ENCODE measurements at regions of chr2 and their contacts with region 1.

Region 1: DNA sequence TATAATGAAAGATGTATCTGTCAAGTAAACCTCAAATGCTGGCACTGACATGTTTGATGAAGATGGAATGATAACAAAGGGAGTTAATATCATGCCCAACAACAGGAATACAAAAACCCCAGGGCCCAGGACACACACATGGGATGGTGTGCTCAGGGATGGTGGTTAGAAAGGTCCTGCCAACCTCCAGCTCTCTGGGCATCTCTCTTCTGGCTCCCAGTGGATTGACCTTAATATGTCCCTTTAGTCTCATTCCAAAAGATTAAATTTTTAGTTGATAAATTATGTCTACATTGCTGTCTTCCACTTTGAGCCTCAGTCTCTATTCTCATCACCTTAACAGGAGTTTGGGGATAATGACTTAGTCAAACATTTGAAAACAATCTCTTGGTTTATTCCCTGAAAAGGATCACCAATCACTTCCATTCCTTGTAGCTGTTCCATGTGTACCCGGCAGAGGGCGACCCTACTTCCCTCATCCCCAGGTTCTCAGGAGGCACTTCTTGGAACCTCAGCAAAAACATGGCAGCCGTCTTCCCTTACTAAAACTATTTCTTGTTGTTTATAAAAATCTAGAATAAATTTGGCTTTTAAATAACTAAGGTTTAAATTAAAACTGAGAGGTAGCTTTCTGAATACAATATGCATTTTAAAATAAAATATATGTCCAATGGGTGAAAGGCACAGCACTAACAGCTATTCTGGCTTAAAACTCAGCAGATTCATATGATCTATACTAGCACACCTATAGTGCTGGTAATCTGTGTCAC is 29.6 kb downstream of the MCEE start:
- DNase-seq: peak; percentile 2
- ATAC-seq: peak; percentile 84
- H3K4me3 ChIP-seq: no peak overlapping the region
- H3K27ac ChIP-seq: no peak overlapping the region
- H3K4me1 ChIP-seq: no peaks in the 10 kb centered on the region
- H3K27me3 ChIP-seq: no peaks in the 10 kb centered on the region
- CTCF ChIP-seq: peak; percentile 72 to 80 (median 78)
- EP300 ChIP-seq: no peak
- POLR2A ChIP-seq: no peak
- RAD21 ChIP-seq: peak; percentile 60

Region 2: GRCh38 chr2:69848201-69848770 is 1252.1 kb before region 1 on chr2:
- CTCF ChIA-PET with region 1: no interaction called
- POLR2A ChIA-PET with region 1: no interaction called
- RAD21 ChIA-PET with region 1: no interaction called
- SMC1A ChIA-PET with region 1: no interaction called
- in situ Hi-C with region 1: no loop called
- intact Hi-C with region 1: no loop called
- DNase-seq: no peak
- ATAC-seq: no peak
- H3K4me3 ChIP-seq: no peak overlapping the region
- H3K27ac ChIP-seq: no peak overlapping the region
- H3K4me1 ChIP-seq: no peaks in the 10 kb centered on the region
- H3K27me3 ChIP-seq: no peaks in the 10 kb centered on the region
- CTCF ChIP-seq: no peak
- EP300 ChIP-seq: no peak
- POLR2A ChIP-seq: no peak
- RAD21 ChIP-seq: no peak

Region 3: GRCh38 chr2:70907130-70908057 is 193.0 kb before region 1 on chr2:
- CTCF ChIA-PET with region 1: no interaction called
- POLR2A ChIA-PET with region 1: no interaction called
- RAD21 ChIA-PET with region 1: no interaction called
- SMC1A ChIA-PET with region 1: no interaction called
- in situ Hi-C with region 1: no loop called
- intact Hi-C with region 1: no loop called
- DNase-seq: no peak
- ATAC-seq: no peak
- H3K4me3 ChIP-seq: no peak overlapping the region
- H3K27ac ChIP-seq: no peak overlapping the region
- H3K4me1 ChIP-seq: no peaks in the 10 kb centered on the region
- H3K27me3 ChIP-seq: peaks cover 13 to 42% of the 10 kb centered on the region in 2 experiments
- CTCF ChIP-seq: no peak
- EP300 ChIP-seq: no peak
- POLR2A ChIP-seq: no peak
- RAD21 ChIP-seq: no peak

Region 4: DNA sequence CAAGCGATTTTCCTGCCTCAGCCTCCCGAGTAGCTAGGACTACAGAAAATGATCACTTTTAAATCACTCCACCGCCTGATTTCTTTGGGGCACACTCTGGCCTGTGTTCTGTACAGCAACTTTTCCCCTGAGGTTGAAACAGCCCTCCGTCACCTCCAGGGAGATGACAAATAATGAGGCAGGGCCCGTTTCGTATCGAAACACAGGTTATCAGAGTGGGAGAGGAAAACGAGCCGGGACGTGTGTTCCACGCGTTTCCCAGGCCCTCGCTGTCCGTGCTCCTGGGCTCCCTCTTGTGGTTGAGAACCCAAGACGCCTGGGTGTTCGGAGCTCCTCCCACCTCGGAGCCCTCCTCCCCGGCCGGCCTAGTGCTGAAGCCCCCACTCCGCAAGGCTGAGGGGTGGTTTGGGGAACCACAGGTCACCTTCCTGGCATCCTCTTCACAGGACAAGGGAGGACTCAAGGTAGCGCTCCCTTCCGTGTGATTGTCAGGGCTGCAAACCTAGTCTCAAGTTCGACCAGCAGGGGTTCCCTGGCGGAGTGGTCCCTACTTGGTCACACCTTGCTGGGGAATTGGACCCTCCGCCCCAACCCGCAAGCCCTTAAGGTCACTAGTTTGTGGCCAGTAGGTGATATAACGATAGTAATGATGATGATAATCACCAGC is 151.9 kb before region 1 on chr2:
- CTCF ChIA-PET with region 1: no interaction called
- POLR2A ChIA-PET with region 1: no interaction called
- RAD21 ChIA-PET with region 1: no interaction called
- SMC1A ChIA-PET with region 1: no interaction called
- in situ Hi-C with region 1: no loop called
- intact Hi-C with region 1: no loop called
- DNase-seq: no peak
- ATAC-seq: peak; percentile 98
- H3K4me3 ChIP-seq: no peak overlapping the region
- H3K27ac ChIP-seq: no peak overlapping the region
- H3K4me1 ChIP-seq: no peaks in the 10 kb centered on the region; the same call in 1 of the 2 replicates
- H3K27me3 ChIP-seq: no peaks in the 10 kb centered on the region
- CTCF ChIP-seq: peak; percentile 73 to 87 (median 87)
- EP300 ChIP-seq: no peak
- POLR2A ChIP-seq: no peak
- RAD21 ChIP-seq: peak; percentile 36; the same call in 1 of the 2 replicates

Region 5: DNA sequence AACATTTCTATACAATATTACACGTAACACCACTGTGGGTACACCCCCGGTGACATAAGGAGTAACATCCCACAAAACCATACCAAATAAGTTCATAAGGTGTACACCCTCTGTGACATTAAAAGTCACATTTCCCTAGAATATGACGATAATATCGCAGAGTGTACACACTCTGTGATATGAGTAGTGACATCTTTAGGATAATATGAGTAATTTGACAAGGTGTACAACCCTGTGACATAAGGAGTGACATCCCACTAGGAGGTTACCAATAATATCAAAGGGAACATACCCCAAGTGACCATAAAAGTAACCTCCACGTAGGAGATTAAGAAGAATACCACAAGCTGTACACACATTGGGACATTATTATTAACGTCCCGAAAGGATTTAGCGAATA is 81.8 kb before region 1 on chr2:
- CTCF ChIA-PET with region 1: interaction called, 11 read pairs
- POLR2A ChIA-PET with region 1: no interaction called
- RAD21 ChIA-PET with region 1: interaction called, 4 read pairs
- SMC1A ChIA-PET with region 1: no interaction called
- in situ Hi-C with region 1: no loop called
- intact Hi-C with region 1: no loop called
- DNase-seq: no peak
- ATAC-seq: no peak
- H3K4me3 ChIP-seq: no peak overlapping the region
- H3K27ac ChIP-seq: no peak overlapping the region
- H3K4me1 ChIP-seq: no peaks in the 10 kb centered on the region
- H3K27me3 ChIP-seq: no peaks in the 10 kb centered on the region
- CTCF ChIP-seq: no peak
- EP300 ChIP-seq: no peak
- POLR2A ChIP-seq: no peak
- RAD21 ChIP-seq: no peak

Region 6: DNA sequence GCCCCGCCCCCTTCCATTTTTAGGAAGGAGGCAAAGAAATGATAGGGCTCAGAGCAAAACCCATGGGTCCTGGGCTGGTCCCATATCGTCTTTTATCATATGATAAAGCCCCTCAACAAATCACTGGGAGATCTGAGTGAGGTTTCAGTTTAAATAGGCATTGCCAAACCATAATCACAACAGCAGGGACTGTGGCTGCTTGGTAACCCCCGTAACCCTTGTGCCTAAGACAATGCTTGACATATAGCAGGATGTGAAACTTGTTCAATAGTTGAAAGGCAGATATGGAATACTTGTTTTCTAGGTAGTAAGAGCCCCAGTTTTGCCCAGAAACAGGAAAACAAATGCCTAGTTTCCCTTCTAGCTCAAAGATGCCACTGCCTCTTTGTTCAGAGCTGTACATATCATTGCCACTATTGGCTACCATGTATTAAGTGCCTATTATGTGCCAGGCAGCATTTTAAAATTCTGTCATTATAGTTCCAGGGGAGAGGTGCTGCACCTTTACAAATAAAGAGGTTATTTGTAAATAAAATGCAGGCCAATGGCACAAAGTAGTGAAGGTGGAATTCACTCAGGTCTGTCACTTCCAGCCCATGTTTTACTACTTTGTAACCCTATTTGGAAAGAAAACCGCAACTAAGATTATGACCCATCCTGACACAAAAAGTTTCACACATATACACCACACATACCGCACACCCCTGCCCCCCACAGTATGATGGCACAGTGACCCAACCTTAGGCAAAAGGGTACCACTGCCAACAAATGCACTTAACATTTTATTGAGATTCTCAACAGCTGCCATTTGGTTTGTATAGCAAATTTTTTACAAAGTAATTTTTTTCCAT is 17.8 kb before region 1 on chr2:
- CTCF ChIA-PET with region 1: interaction called, 10 read pairs
- POLR2A ChIA-PET with region 1: no interaction called
- RAD21 ChIA-PET with region 1: no interaction called
- SMC1A ChIA-PET with region 1: no interaction called
- in situ Hi-C with region 1: no loop called
- intact Hi-C with region 1: no loop called
- DNase-seq: no peak
- ATAC-seq: peak; percentile 91
- H3K4me3 ChIP-seq: no peak overlapping the region
- H3K27ac ChIP-seq: peak overlapping the region; percentile 24; the same call in 1 of the 2 replicates
- H3K4me1 ChIP-seq: peaks cover 14% of the 10 kb centered on the region
- H3K27me3 ChIP-seq: no peaks in the 10 kb centered on the region
- CTCF ChIP-seq: no peak
- EP300 ChIP-seq: 0 out of 4 replicates have a peak, but pooled peaks have one; percentile 33 to 40
- POLR2A ChIP-seq: no peak
- RAD21 ChIP-seq: no peak

Region 7: GRCh38 chr2:71130113-71130904 is 29.9 kb after region 1 on chr2 and contains the starts of genes MCEE and MPHOSPH10:
- CTCF ChIA-PET with region 1: interaction called, 36 read pairs
- POLR2A ChIA-PET with region 1: interaction called, 4 read pairs
- RAD21 ChIA-PET with region 1: interaction called, 7 read pairs
- SMC1A ChIA-PET with region 1: interaction called, 7 read pairs
- in situ Hi-C with region 1: no loop called
- intact Hi-C with region 1: no loop called
- DNase-seq: peak; percentile 64
- ATAC-seq: peak; percentile 97
- H3K4me3 ChIP-seq: peak within 1 kb of the TSS; percentile 93
- H3K27ac ChIP-seq: peak within 1 kb of the TSS; percentile 86
- H3K4me1 ChIP-seq: peaks cover 5% of the 10 kb centered on the region; the same call in 1 of the 2 replicates
- H3K27me3 ChIP-seq: no peaks in the 10 kb centered on the region
- CTCF ChIP-seq: no peak
- EP300 ChIP-seq: no peak
- POLR2A ChIP-seq: peak; percentile 90
- RAD21 ChIP-seq: no peak
- polyA plus RNA-seq, gene MCEE: 43.6 to 63.4 TPM
- polyA plus RNA-seq, gene MPHOSPH10: 29.1 to 40.4 TPM

Region 8: DNA sequence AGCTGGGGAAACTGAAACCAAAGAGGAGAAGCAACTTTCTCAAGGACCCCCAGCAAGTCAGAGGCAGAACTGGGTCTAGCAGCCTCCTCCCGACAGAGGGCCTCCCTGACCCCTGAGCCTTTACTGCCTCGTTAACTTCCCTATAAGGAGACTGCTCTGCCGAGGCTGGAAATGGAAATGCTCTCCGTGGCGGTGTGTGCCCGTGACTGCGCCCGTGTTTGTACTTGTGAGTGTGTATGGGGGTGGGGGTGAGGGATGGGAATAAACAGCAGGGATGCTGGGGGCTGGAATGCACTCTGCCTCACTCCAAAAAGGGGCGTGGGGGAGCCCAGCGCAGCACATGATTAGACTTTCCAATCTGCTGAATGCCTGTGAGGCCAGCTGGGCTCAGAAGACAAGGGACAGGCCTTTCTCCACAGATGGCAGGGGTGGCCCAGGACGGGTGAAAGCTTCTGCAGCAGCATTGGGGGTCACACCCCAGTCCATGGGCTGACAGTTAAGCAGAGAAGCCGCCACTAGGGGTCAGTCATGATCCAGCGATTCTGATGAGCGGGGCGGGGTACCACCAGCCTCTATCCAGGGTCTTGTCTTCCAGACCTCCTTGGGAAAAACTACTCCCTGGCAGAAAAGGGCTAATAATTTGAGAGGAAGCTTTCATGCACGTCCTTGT is 56.9 kb after region 1 on chr2:
- CTCF ChIA-PET with region 1: interaction called, 52 read pairs
- POLR2A ChIA-PET with region 1: no interaction called
- RAD21 ChIA-PET with region 1: interaction called, 31 read pairs
- SMC1A ChIA-PET with region 1: interaction called, 14 read pairs
- in situ Hi-C with region 1: no loop called
- intact Hi-C with region 1: no loop called
- DNase-seq: no peak
- ATAC-seq: peak; percentile 88
- H3K4me3 ChIP-seq: no peak overlapping the region
- H3K27ac ChIP-seq: no peak overlapping the region
- H3K4me1 ChIP-seq: no peaks in the 10 kb centered on the region
- H3K27me3 ChIP-seq: no peaks in the 10 kb centered on the region
- CTCF ChIP-seq: peak; percentile 58 to 76 (median 68)
- EP300 ChIP-seq: no peak
- POLR2A ChIP-seq: no peak
- RAD21 ChIP-seq: peak; percentile 67

Region 9: DNA sequence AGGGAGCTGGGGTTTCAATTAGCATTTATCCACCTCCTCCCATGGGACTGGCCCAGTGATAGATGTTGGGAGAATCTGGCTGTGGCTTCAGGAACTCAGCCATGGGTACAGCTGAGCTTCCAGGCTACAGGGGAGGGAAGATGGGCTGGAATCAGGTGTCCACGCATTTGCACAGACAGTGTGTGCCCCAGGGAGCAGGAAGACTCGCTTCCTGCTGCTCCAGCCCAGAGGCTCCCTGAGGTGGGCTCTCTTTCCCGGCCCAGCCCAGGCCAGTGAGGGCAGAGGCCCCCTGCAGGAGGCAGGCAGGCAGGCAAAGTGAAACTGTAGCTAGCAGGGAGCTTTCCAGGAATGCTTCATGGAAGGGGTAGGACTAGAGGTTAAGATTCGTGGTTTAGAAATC is 381.7 kb after region 1 on chr2:
- CTCF ChIA-PET with region 1: no interaction called
- POLR2A ChIA-PET with region 1: no interaction called
- RAD21 ChIA-PET with region 1: no interaction called
- SMC1A ChIA-PET with region 1: no interaction called
- in situ Hi-C with region 1: no loop called
- intact Hi-C with region 1: no loop called
- DNase-seq: no peak
- ATAC-seq: no peak
- H3K4me3 ChIP-seq: no peak overlapping the region
- H3K27ac ChIP-seq: no peak overlapping the region
- H3K4me1 ChIP-seq: no peaks in the 10 kb centered on the region
- H3K27me3 ChIP-seq: peaks cover 0 to 2% of the 10 kb centered on the region in 2 experiments; a peak in 1 of 4 replicates
- CTCF ChIP-seq: no peak
- EP300 ChIP-seq: no peak
- POLR2A ChIP-seq: no peak
- RAD21 ChIP-seq: no peak